ENCODE measurements at regions of chrX and their contacts with region 1.

Region 1: GRCh38 chrX:47854474-47854873 is 17.8 kb downstream of the ZNF81 start:
- DNase-seq: peak; percentile 18 to 48 (median 26)
- ATAC-seq: no peak
- H3K4me3 ChIP-seq: no peak overlapping the region
- H3K27ac ChIP-seq: no peak overlapping the region
- H3K4me1 ChIP-seq: no peaks in the 10 kb centered on the region
- H3K27me3 ChIP-seq: no peaks in the 10 kb centered on the region
- CTCF ChIP-seq: peak in 6 of 7 experiments; percentile 13 to 56 (median 46)
- POLR2A ChIP-seq: no peak

Region 2: GRCh38 chrX:47796433-47796906 is 58.0 kb before region 1 on chrX:
- intact Hi-C with region 1: no loop called
- DNase-seq: no peak
- ATAC-seq: no peak
- H3K4me3 ChIP-seq: no peak overlapping the region
- H3K27ac ChIP-seq: no peak overlapping the region
- H3K4me1 ChIP-seq: no peaks in the 10 kb centered on the region
- H3K27me3 ChIP-seq: no peaks in the 10 kb centered on the region
- CTCF ChIP-seq: no peak
- POLR2A ChIP-seq: no peak

Region 3: DNA sequence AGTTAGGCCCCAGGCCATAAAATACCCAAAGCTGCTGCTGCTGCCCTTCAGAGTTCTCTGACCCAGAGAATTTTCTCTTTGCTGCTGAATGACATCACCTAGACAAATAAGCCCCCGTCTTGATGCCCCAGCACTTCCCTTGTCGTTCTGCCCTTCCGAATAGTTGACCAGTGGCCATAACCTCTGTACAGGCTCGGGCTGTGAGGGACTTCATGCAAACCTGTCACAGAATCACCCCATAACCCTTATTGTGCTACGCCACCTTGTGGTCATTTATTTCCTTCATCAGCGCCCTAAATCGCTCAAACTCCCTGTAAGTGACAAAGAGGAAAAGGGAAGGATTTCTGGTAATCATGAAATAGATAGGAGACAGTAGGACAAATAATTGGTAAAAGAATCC is 171.1 kb after region 1 on chrX:
- intact Hi-C with region 1: loop called (anchors 5 kb)
- DNase-seq: peak; percentile 40 to 55 (median 50)
- ATAC-seq: peak; percentile 54
- H3K4me3 ChIP-seq: no peak overlapping the region
- H3K27ac ChIP-seq: no peak overlapping the region
- H3K4me1 ChIP-seq: no peaks in the 10 kb centered on the region
- H3K27me3 ChIP-seq: no peaks in the 10 kb centered on the region
- CTCF ChIP-seq: peak; percentile 23 to 62 (median 52)
- POLR2A ChIP-seq: no peak

Region 4: DNA sequence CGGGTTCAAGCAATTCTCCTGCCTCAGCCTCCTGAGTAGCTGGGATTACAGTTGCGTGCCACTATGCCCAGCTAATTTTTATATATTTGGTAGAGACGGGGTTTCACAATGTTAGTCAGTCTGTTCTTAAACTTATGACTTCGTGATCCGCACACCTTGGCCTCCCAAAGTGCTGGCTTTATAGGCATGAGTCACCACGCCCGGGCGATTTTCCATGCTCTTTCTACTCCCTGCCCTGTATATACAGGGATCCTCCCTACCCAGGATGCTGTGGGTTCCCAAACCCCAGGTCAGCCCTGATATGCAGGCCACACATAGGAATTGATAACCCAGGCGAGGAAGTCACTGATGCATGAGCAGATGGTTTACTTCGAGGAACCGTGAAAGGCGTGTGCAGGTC is 310.8 kb after region 1 on chrX:
- intact Hi-C with region 1: no loop called
- DNase-seq: no peak
- ATAC-seq: no peak
- H3K4me3 ChIP-seq: no peak overlapping the region
- H3K27ac ChIP-seq: no peak overlapping the region
- H3K4me1 ChIP-seq: no peaks in the 10 kb centered on the region
- H3K27me3 ChIP-seq: no peaks in the 10 kb centered on the region
- CTCF ChIP-seq: no peak
- POLR2A ChIP-seq: no peak

Region 5: GRCh38 chrX:48306175-48306574 is 451.7 kb after region 1 on chrX:
- intact Hi-C with region 1: no loop called
- DNase-seq: no peak
- ATAC-seq: no peak
- H3K4me3 ChIP-seq: no peak overlapping the region
- H3K27ac ChIP-seq: no peak overlapping the region
- H3K4me1 ChIP-seq: no peaks in the 10 kb centered on the region
- H3K27me3 ChIP-seq: no peaks in the 10 kb centered on the region
- CTCF ChIP-seq: no peak
- POLR2A ChIP-seq: no peak

Measured in body of pancreas (tissue), 4 donors.